ENCODE measurements at regions of chr22 and their contacts with region 1.

Region 1: DNA sequence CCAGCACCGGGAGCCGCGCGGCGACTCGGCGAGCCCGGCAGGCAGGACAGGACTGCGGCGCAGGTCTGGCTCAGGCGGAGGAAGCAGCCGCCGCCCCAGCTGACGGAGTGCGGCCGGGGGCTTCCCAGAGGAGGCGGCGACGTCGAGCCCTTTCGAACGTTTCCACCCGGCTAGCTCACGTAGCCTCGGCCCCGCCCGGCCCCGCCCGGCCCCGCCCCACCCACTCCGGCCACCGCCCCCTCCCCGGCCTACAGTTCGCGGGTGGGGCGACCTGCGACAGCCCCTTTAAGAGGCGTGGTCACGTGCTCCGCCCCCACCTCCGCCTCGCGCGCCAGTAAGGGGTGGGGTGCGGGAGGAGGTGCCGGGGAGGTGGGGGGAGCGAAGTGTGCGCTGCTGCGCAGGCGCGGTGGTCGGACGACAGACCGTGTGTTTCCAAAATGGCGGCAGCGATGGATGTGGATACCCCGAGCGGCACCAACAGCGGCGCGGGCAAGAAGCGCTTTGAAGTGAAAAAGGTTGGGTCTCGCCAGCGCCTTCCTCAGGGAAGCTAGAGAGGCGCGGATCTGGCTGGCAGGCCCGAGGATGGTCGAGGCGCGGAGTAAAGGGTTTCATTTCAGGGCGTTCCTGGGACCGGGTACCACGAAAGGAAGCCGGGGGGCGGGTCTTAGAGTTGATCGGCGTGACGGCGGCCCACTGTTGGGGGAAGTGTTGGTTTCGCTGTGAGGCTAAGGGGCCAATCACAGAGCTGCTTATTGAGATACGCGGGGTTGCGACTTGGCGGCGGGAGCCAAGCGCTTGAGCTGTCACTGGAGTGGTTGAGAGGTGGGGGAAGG is at the start of gene RBX1:
- DNase-seq: peak; percentile 96 to 100 (median 98)
- H3K4me3 ChIP-seq: peak within 1 kb of the TSS; percentile 66 to 97 (median 89)
- H3K27ac ChIP-seq: peak within 1 kb of the TSS; percentile 92 to 100 (median 99)
- H3K27me3 ChIP-seq: no peaks in the 10 kb centered on the region
- CTCF ChIP-seq: peak in 10 of 56 donors; percentile 3 to 23 (median 10)
- total RNA-seq, gene RBX1: 33.0 to 73.0 (median 57.3) TPM

Region 2: GRCh38 chr22:41022470-41023298 is 71.5 kb after region 1 on chr22:
- intact Hi-C with region 1: loop called in 1 of 2 experiments (anchors 2 kb)
- DNase-seq: peak; percentile 55 to 84 (median 70)
- H3K4me3 ChIP-seq: peak overlapping the region; percentile 56 to 87 (median 78)
- H3K27ac ChIP-seq: peak overlapping the region in 57 of 59 donors; percentile 6 to 94 (median 85)
- H3K27me3 ChIP-seq: no peaks in the 10 kb centered on the region
- CTCF ChIP-seq: peak in 5 of 56 donors; percentile 2 to 33 (median 14)

Region 3: DNA sequence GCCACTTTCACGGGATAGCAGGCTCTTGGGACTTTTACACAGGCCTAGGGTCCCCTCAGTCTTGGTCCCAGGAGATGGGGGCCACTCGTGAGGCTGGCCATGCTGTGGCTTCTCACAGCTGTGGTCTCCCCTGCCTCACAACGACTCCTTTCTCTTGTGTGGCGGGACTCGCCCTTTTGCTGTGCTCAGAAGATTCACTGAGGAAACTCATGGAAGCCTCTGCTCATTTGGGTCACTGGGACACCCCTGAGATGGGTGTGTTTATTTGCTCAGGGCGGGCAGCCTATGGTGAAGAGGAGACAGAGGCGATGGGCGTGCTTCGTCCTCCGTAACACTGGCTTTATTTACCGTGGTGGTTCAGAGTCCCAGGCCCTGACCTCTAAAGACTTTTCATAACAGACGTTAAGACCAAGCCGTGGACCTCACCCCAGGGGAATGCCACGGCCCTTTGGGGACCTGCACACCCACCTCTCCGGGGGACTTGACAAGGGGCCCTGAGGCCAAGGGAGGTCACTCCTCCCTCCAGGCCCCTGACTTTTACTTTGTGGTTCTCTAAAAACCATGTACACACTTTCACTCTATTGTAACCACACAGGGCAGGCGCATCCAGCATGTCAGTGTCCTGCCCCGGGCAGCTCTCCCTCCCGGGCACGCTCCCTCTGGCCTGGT is 446.1 kb after region 1 on chr22:
- intact Hi-C with region 1: loop called in 1 of 2 experiments (anchors 10 kb)
- DNase-seq: no peak
- H3K4me3 ChIP-seq: no peak overlapping the region
- H3K27ac ChIP-seq: peak overlapping the region in 55 of 59 donors; percentile 26 to 100 (median 96)
- H3K27me3 ChIP-seq: no peaks in the 10 kb centered on the region
- CTCF ChIP-seq: no peak

Measured in dorsolateral prefrontal cortex (tissue), 120 donors.